ENCODE measurements at regions of chr9 and their contacts with region 1.

Region 1: DNA sequence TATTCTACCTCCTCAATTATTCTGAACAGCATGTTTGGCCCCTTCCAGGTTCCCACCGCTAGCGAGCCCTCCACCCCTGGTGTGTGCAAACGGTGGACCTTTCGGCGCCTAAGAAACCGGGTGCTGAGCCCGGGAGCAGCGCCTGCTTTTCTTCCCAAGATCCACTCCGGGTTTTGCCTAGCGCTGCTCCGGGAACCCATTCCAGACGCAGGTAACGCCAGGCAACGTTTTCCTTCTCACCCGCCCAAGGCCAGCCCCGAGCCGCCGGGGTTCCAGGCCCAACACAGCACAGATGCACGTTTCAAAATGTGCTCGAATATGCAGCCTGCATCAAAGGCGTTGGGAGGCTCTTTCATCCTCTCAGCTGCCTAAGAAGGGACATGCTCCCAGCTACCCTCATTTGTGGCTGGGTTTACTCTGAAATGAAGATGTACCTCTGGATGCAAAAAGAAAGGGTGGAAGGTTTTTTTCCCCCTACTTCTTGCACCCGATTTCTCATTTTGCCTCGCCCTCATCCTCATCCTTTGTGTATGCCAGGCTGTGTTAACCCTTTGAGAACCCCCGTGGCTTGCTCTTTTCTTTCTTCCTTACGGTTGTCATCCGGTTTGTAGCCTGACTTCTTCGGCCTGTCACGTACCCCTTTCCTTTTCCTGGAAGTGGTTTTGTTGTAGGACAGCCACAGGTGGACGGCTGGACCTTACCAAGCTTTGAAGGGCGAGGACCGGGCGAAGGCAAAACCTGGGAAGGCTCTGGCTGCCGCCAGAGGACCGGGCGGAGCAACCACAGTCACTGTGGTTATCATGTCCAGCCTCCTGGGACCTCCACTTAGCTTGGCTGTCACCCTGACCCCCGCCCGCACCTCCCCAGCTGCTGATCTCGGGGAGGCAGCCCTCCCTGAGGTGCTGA is 226.9 kb downstream of the SMARCA2 start:
- DNase-seq: peak; percentile 85 to 98 (median 88)

Region 2: DNA sequence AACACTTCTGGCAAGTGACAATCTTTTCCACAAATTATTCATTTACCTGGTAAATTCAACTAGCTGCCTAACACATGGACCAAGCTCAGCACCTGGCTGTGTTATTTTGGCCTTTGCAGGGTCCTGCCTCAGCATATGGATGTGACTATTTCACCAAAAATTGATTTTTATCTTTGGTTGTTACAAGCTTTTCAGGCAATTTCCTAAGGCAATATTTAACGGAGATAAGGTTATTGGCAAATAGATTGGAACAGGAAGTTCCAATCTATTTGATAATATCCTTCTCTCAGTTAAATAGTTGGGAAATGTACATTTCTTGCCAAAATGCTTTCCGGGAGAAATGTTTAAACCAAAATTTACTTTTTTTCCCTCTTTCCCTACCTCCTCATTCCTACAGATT is 642.1 kb before region 1 on chr9:
- intact Hi-C with region 1: no loop called
- DNase-seq: no peak

Region 3: DNA sequence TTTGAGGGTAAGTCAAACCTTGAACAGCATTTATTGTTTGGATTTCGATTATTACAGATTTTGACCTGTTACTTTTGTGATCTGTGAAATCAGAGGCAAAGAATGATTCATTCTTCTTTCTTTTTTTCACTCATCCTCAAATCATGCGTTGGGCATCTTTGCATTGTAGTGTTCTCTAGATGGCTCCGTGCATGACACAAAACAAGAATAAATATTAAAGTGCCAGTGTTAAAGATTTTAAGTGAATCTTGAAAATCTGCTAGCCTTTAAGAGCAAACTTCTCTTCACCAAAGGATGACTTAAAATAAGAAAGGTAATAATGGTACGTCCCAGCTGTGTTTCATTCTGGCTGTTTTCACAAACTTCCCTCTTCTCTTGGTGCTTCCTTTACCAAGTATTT is 588.8 kb before region 1 on chr9:
- intact Hi-C with region 1: no loop called
- DNase-seq: no peak

Region 4: DNA sequence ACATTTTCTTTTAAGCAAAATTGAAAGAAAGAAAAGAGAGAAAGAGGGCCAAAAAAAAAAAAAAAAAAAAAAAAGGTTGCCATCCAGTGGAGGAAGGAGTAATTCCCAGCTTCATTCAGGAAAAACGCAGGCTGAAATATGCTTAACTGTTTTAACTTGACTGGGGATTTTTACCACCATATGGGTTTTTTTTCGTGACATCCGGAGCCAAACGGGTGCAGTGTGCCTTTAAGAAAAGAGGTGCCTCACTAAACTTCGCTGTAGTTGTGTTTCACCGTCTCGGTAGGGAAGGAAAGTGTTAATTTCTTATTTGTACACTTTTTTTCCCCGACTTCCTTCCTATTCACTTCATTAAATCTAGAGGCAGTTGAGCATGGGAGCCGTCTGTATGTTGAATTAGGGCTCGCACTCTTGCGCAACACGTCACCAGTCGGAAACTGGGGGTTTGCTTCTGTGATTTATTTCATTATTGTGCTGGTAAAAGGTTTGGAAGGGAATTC is 83.9 kb before region 1 on chr9:
- intact Hi-C with region 1: loop called (anchors 5 kb)
- DNase-seq: peak in 4 of 10 donors; percentile 14 to 60 (median 22)

Region 5: GRCh38 chr9:2469681-2470221 is 227.7 kb after region 1 on chr9:
- intact Hi-C with region 1: loop called (anchors 10 kb)
- DNase-seq: peak in 1 of 10 donors; percentile 16

Region 6: DNA sequence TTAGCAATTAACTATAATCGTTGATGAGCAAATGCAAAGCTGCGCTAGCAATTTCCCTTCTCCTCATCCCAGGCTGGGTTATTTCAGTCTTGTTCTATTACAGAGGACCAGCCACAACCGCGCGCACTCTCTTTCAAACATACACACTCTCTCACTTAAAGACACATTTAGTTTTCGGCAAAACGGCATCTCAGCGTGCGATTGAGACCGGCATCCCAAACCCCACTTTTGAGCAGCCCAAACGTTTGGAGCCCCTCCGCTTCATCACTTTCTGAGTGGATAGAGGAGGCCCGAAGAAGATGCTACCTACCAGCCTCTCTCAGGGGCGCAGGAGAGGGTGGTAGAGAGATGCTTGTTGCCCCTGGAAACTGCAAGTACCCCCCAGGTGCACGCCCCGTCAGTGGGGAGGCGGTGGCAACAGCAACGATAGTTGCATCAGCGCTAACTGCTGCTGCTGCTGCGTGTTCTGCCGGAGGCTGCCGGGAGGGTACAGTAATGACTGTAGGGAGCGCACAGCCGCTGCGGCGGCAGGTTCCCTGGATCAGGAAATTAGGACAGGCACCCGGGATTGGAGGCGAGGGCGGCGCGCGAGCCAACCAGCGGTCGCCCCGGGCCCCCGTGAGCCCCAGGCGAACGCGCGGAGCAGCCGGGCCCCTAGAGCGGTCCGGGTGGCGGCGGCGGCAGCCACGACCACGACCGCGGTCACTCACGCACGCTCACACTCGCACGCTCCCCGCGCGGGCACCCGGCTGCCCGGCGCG is 379.0 kb after region 1 on chr9:
- intact Hi-C with region 1: loop called (anchors 5 kb)
- DNase-seq: peak; percentile 52 to 97 (median 78)

Region 7: DNA sequence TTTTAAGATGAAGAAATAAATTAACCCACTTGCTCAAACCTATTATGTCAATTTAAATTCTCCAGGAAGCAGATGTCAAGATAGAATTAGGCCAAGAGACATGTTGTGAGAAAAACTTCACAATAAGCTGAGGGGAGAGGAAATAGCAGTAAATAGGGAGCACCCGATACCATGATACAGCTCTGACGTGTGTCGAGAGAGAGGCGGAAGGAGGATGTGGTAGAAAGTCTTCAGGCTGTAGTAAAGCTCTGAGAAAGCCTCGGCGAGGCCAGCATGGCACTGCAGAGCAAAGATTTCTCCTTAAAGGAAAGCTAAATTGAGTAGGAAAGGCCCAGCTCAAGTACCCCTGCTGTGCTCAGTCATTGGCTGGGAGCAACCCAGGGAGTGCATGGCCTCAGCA is 607.9 kb after region 1 on chr9:
- intact Hi-C with region 1: loop called (anchors 2 kb)
- DNase-seq: no peak